ENCODE measurements at regions of chr1 and their contacts with region 1.

Region 1: DNA sequence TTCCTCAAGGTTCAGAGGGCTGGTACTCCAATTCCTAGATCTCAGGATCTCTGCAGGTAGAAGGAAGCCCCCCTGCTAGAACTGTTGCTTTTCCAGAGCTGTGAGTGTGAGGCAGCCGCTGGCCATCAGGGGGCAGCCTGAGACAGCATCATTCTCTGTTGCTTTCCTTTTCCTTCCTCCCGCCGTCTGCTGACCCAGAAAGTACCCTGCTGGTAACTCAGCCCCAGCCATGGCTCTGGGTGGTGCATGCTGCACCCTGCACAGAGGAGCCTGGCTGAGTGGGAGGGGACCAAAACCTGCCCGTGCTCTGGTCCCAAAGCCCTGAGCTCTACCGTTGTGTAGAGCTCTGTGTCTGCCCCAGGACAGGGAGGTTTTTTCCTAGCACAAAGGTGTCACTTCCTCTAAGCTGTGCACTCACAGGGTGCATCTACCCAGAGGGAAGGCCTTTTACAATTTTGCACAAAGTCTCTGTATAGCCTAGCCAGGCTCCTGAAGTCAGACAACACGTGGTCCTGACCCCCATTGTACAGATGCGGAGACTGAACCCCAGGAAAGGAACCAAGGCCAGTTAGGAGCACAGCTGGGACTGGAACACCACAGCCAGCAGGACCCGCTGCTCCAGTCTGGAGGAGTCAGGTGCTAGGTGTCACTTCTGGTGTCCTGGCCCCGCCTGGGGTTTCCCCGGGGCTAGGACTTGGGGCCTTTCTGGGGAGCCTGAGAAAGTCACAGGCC is 5.6 kb upstream of the FAM131C start:
- DNase-seq: peak; percentile 93
- H3K4me3 Mint-ChIP-seq: peak overlapping the region; percentile 75
- H3K27ac Mint-ChIP-seq: peak overlapping the region; percentile 87
- H3K4me1 Mint-ChIP-seq: peaks cover 12% of the 10 kb centered on the region
- H3K27me3 Mint-ChIP-seq: peaks cover 6% of the 10 kb centered on the region

Region 2: GRCh38 chr1:16187748-16188401 is 108.8 kb after region 1 on chr1:
- intact Hi-C with region 1: loop called (anchors 1 kb)
- DNase-seq: peak; percentile 94
- H3K4me3 Mint-ChIP-seq: no peak overlapping the region
- H3K27ac Mint-ChIP-seq: no peak overlapping the region
- H3K4me1 Mint-ChIP-seq: no peaks in the 10 kb centered on the region
- H3K27me3 Mint-ChIP-seq: peaks cover 7% of the 10 kb centered on the region

Region 3: DNA sequence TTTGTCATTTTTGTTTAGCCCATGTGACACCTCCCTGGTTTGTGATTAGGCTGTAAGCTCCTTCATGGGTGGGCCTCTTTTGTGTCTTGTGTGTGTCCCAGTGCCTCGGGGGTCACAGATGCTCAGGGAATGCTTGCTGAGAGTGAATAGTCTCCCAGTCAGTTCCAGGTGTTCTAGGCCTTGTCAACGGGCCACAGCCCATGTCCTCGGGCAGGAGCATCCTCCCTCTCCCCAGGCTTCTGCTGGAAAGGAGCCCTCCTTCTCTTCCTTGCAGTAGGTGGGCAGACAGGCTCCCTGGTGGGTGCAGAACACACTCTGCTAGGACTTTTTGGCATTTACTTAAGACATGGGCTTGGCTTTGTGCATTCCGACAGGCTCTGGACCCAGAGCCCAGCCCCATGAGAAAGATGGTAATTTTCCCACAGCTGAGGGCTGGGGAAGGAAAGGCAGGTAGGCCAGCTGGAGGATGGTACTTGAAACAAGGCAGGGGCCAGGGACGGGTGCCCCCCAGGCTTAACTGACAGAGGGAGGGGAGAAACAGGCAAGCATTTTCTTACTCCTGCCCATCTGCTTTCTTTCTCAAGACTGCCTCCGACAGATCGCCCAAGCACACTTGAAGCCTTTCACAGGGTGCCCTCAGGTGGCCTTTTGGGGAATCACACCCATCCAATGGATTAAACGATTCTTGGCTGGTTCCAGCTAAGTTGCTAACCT is 165.0 kb after region 1 on chr1:
- intact Hi-C with region 1: loop called (anchors 1 kb)
- DNase-seq: peak; percentile 93
- H3K4me3 Mint-ChIP-seq: no peak overlapping the region
- H3K27ac Mint-ChIP-seq: no peak overlapping the region
- H3K4me1 Mint-ChIP-seq: peaks cover 8% of the 10 kb centered on the region
- H3K27me3 Mint-ChIP-seq: no peaks in the 10 kb centered on the region

Region 4: GRCh38 chr1:16254263-16254928 is 175.3 kb after region 1 on chr1:
- intact Hi-C with region 1: no loop called
- DNase-seq: no peak
- H3K4me3 Mint-ChIP-seq: no peak overlapping the region
- H3K27ac Mint-ChIP-seq: no peak overlapping the region
- H3K4me1 Mint-ChIP-seq: peaks cover 9% of the 10 kb centered on the region
- H3K27me3 Mint-ChIP-seq: no peaks in the 10 kb centered on the region